CD4-positive, alpha-beta memory T cell (primary cell): ENCODE measurements at regions of chr3 and their contacts with region 1.

Region 1: DNA sequence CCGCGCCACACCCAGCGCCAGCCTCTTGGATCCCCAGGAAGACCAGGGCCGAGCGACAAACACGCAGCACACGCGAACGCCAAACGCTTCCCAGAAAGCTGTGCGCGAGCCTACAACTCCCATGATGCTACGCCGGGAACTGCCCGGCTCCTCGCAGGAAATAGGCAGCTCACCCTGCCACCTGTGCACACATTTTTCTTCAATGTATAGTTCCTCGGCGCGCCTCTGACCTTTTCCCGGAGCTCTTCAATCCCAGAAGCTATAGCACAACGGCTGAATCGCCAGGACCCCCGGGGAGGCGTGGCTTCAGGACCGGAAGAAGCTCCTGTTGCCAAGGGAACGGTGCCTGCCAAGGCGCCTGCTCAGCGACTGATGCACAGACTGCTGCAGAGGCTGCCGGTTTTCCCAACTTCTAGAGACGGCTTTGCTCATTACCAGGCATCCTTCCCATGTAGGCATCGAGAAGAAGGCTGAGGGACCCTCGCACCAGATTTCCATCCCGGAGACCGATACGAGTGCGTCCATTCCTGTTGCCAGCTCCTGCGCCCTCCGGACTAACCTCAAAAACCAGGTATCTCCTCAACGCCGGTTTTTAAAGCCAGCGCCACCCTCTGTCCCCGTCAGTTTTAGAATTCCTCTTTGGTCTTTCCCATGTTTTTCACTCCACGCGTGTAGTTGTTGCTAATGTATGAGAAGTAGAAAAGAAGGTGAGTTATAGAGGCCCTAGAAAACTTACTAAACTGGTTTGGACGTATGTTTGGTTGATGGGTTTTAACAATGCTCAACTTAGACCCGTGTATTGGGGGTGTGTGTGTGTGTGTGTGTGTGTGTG is at the start of gene ARL6:
- DNase-seq: peak; percentile 71 to 80 (median 75)
- H3K4me3 ChIP-seq: peak within 1 kb of the TSS; percentile 84
- H3K4me3 Mint-ChIP-seq: peak within 1 kb of the TSS; percentile 97 to 99 (median 98)
- H3K27ac ChIP-seq: peak within 1 kb of the TSS; percentile 73
- H3K27ac Mint-ChIP-seq: peak within 1 kb of the TSS; percentile 93 to 98 (median 95)
- H3K4me1 ChIP-seq: peaks cover 24% of the 10 kb centered on the region
- H3K4me1 Mint-ChIP-seq: peaks cover 11 to 32% (median 23%) of the 10 kb centered on the region in 4 donors
- H3K27me3 ChIP-seq: no peaks in the 10 kb centered on the region
- H3K27me3 Mint-ChIP-seq: no peaks in the 10 kb centered on the region
- total RNA-seq, gene ARL6: 3.7 to 6.4 TPM

Region 2: GRCh38 chr3:97610626-97611025 is 154.0 kb before region 1 on chr3:
- CTCF ChIA-PET with region 1: no interaction called
- POLR2A ChIA-PET with region 1: no interaction called
- intact Hi-C with region 1: no loop called
- DNase-seq: no peak
- H3K4me3 ChIP-seq: no peak overlapping the region
- H3K4me3 Mint-ChIP-seq: no peak overlapping the region
- H3K27ac ChIP-seq: no peak overlapping the region
- H3K27ac Mint-ChIP-seq: no peak overlapping the region
- H3K4me1 ChIP-seq: no peaks in the 10 kb centered on the region
- H3K4me1 Mint-ChIP-seq: no peaks in the 10 kb centered on the region
- H3K27me3 ChIP-seq: no peaks in the 10 kb centered on the region
- H3K27me3 Mint-ChIP-seq: peaks cover 2% of the 10 kb centered on the region in 2 donors

Region 3: GRCh38 chr3:98901392-98902350 is 1137.0 kb after region 1 on chr3 and contains the start of gene DCBLD2:
- CTCF ChIA-PET with region 1: no interaction called
- POLR2A ChIA-PET with region 1: no interaction called
- intact Hi-C with region 1: loop called (anchors 5 kb)
- DNase-seq: peak; percentile 88 to 94 (median 91)
- H3K4me3 ChIP-seq: peak within 1 kb of the TSS; percentile 53 to 75
- H3K4me3 Mint-ChIP-seq: peak within 1 kb of the TSS; percentile 87 to 96 (median 93)
- H3K27ac ChIP-seq: peak within 1 kb of the TSS; percentile 12
- H3K27ac Mint-ChIP-seq: peak within 1 kb of the TSS; percentile 64 to 92 (median 82)
- H3K4me1 ChIP-seq: peaks cover 8% of the 10 kb centered on the region
- H3K4me1 Mint-ChIP-seq: peaks cover 8 to 28% (median 12%) of the 10 kb centered on the region in 4 donors
- H3K27me3 ChIP-seq: peaks cover 8% of the 10 kb centered on the region
- H3K27me3 Mint-ChIP-seq: peaks cover 4 to 25% of the 10 kb centered on the region in 2 donors
- total RNA-seq, gene DCBLD2: 1.7 to 2.5 TPM